GM12878 (cell line): ENCODE measurements at regions of chr3 and their contacts with region 1.

Region 1: GRCh38 chr3:152444029-152444641 is 175.4 kb downstream of the MBNL1 start:
- DNase-seq: peak; percentile 33
- ATAC-seq: peak; percentile 75
- H3K4me3 ChIP-seq: no peak overlapping the region
- H3K27ac ChIP-seq: no peak overlapping the region; the same call in 1 of the 2 replicates
- H3K4me1 ChIP-seq: peaks cover 13% of the 10 kb centered on the region; the same call in 1 of the 2 replicates
- H3K27me3 ChIP-seq: no peaks in the 10 kb centered on the region
- CTCF ChIP-seq: peak; percentile 48 to 70 (median 59); a peak in 5 of 6 replicates
- EP300 ChIP-seq: no peak
- POLR2A ChIP-seq: no peak
- RAD21 ChIP-seq: peak; percentile 91

Region 2: GRCh38 chr3:152159328-152159727 is 284.8 kb before region 1 on chr3:
- CTCF ChIA-PET with region 1: interaction called, 10 read pairs
- POLR2A ChIA-PET with region 1: no interaction called
- RAD21 ChIA-PET with region 1: interaction called, 4 read pairs
- SMC1A ChIA-PET with region 1: interaction called, 3 read pairs
- in situ Hi-C with region 1: no loop called
- intact Hi-C with region 1: no loop called
- DNase-seq: no peak
- ATAC-seq: no peak
- H3K4me3 ChIP-seq: no peak overlapping the region
- H3K27ac ChIP-seq: no peak overlapping the region
- H3K4me1 ChIP-seq: peaks cover 3% of the 10 kb centered on the region; the same call in 1 of the 2 replicates
- H3K27me3 ChIP-seq: no peaks in the 10 kb centered on the region
- CTCF ChIP-seq: no peak
- EP300 ChIP-seq: no peak
- POLR2A ChIP-seq: no peak
- RAD21 ChIP-seq: no peak

Region 3: GRCh38 chr3:152205097-152205593 is 239.0 kb before region 1 on chr3:
- CTCF ChIA-PET with region 1: interaction called, 3 read pairs
- POLR2A ChIA-PET with region 1: no interaction called
- RAD21 ChIA-PET with region 1: interaction called, 13 read pairs
- SMC1A ChIA-PET with region 1: interaction called, 6 read pairs
- in situ Hi-C with region 1: no loop called
- intact Hi-C with region 1: no loop called
- DNase-seq: no peak
- ATAC-seq: peak; percentile 53
- H3K4me3 ChIP-seq: peak overlapping the region; percentile 30
- H3K27ac ChIP-seq: peak overlapping the region; percentile 82
- H3K4me1 ChIP-seq: peaks cover 11% of the 10 kb centered on the region; the same call in 1 of the 2 replicates
- H3K27me3 ChIP-seq: no peaks in the 10 kb centered on the region
- CTCF ChIP-seq: no peak
- EP300 ChIP-seq: no peak
- POLR2A ChIP-seq: no peak
- RAD21 ChIP-seq: no peak

Region 4: DNA sequence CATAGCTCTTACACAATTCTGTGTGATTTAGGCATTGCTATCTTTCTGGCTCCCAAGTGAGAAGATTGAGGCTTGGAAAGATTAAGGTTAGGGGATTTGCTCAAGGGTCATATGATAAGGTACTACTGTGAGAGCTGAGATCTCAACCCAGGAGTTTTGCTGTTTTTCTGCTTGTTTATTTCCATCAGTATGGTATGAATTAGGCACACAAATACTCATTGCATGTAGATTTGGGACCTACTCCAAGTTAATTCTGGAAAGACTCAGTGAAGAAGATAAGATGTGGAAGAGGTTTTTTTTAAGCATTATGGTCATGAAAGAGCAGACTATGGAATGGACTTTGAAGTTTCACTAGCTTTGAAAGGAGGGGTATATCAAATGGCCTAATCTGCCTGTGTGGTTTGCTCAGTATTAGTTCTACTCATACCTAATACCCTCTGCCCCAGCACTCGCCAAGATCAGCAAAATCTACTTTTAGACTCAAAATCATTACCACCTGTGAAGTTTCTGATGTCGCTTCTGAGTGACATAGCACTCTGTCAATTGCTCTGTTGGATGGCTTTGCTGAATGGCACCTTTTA is 162.9 kb before region 1 on chr3:
- CTCF ChIA-PET with region 1: interaction called, 24 read pairs
- POLR2A ChIA-PET with region 1: no interaction called
- RAD21 ChIA-PET with region 1: interaction called, 24 read pairs
- SMC1A ChIA-PET with region 1: interaction called, 57 read pairs
- in situ Hi-C with region 1: no loop called
- intact Hi-C with region 1: no loop called
- DNase-seq: no peak
- ATAC-seq: peak; percentile 68
- H3K4me3 ChIP-seq: peak overlapping the region; percentile 33; the same call in 1 of the 2 replicates
- H3K27ac ChIP-seq: peak overlapping the region; percentile 64
- H3K4me1 ChIP-seq: peaks cover 43% of the 10 kb centered on the region
- H3K27me3 ChIP-seq: no peaks in the 10 kb centered on the region
- CTCF ChIP-seq: no peak
- EP300 ChIP-seq: no peak
- POLR2A ChIP-seq: no peak
- RAD21 ChIP-seq: no peak

Region 5: DNA sequence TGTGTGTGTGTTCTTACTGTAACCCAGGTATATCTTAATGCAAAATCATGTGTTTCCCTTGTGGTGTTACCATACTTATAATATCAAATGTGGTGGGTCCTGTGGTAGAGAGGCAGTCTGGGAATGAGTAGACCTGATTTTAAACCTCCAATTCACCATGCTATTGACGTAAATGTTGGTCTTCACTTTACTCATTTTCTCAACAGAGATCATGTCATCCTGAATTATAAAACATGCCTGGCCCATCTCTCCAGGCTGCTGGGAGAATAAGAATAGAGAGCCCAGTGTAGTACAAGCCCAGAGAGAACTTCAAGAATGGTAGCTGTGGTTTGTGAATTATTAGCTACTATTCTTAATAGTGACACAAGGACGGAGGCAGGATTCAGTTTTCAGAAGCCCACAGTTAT is 87.3 kb before region 1 on chr3:
- CTCF ChIA-PET with region 1: interaction called, 15 read pairs
- POLR2A ChIA-PET with region 1: interaction called, 4 read pairs
- RAD21 ChIA-PET with region 1: interaction called, 6 read pairs
- SMC1A ChIA-PET with region 1: interaction called, 17 read pairs
- in situ Hi-C with region 1: no loop called
- intact Hi-C with region 1: loop called (anchors 5 kb)
- DNase-seq: peak; percentile 61
- ATAC-seq: peak; percentile 89
- H3K4me3 ChIP-seq: no peak overlapping the region
- H3K27ac ChIP-seq: peak overlapping the region; percentile 48
- H3K4me1 ChIP-seq: peaks cover 14% of the 10 kb centered on the region
- H3K27me3 ChIP-seq: no peaks in the 10 kb centered on the region
- CTCF ChIP-seq: no peak
- EP300 ChIP-seq: peak; percentile 90
- POLR2A ChIP-seq: no peak
- RAD21 ChIP-seq: no peak

Region 6: GRCh38 chr3:152399374-152399773 is 44.8 kb before region 1 on chr3:
- CTCF ChIA-PET with region 1: interaction called, 11 read pairs
- POLR2A ChIA-PET with region 1: no interaction called
- RAD21 ChIA-PET with region 1: interaction called, 19 read pairs
- SMC1A ChIA-PET with region 1: interaction called, 23 read pairs
- in situ Hi-C with region 1: no loop called
- intact Hi-C with region 1: no loop called
- DNase-seq: no peak
- ATAC-seq: 0 out of 3 replicates have a peak, but pooled peaks have one; percentile 8
- H3K4me3 ChIP-seq: no peak overlapping the region
- H3K27ac ChIP-seq: no peak overlapping the region
- H3K4me1 ChIP-seq: no peaks in the 10 kb centered on the region; the same call in 1 of the 2 replicates
- H3K27me3 ChIP-seq: no peaks in the 10 kb centered on the region
- CTCF ChIP-seq: no peak
- EP300 ChIP-seq: no peak
- POLR2A ChIP-seq: no peak
- RAD21 ChIP-seq: no peak

Region 7: DNA sequence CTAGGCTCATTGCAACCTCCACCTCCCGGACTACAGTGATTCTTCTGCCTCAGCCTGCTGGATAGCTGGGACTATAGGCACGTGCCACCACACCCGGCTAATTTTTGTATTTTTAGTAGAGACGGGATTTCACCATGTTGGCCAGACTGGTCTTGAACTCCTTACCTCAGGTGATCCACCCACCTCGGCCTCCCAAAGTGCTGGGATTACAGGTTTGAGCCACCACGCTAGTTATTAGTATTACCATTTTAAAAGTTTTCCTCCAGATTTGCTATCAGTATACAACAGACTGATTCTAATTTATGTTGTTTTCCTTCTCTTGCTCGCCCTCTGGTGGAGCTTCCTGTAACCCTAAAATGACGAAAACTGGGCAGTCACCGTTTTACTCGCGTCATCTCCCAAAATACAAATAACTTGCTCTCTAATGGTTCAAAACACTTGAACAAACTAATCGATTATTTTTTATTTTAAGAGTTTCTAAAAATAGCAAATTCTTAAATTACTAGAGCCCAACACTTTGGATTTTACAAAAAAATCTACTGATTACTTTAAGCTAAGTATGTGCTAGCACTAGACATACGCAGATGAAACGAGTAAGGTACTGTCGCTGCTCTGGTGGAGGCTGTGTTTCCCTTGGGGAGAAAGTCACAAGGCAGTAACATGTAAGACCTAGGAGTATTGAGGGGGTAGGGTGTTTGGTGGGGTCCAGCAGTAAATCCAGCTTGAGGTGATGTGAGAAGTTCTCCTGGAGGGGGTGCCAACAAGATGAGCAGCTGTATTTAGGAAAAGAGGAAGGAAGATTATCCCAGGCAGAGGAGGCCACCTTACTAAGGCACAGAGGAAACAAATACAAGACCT is 27.9 kb after region 1 on chr3:
- CTCF ChIA-PET with region 1: interaction called, 20 read pairs
- POLR2A ChIA-PET with region 1: no interaction called
- RAD21 ChIA-PET with region 1: interaction called, 9 read pairs
- SMC1A ChIA-PET with region 1: interaction called, 12 read pairs
- in situ Hi-C with region 1: no loop called
- intact Hi-C with region 1: no loop called
- DNase-seq: peak; percentile 37
- ATAC-seq: peak; percentile 85
- H3K4me3 ChIP-seq: no peak overlapping the region; the same call in 1 of the 2 replicates
- H3K27ac ChIP-seq: no peak overlapping the region
- H3K4me1 ChIP-seq: no peaks in the 10 kb centered on the region
- H3K27me3 ChIP-seq: no peaks in the 10 kb centered on the region
- CTCF ChIP-seq: peak; percentile 61 to 65 (median 65)
- EP300 ChIP-seq: no peak
- POLR2A ChIP-seq: no peak
- RAD21 ChIP-seq: peak; percentile 65